ENCODE measurements at regions of chr15 and their contacts with region 1.

Region 1: DNA sequence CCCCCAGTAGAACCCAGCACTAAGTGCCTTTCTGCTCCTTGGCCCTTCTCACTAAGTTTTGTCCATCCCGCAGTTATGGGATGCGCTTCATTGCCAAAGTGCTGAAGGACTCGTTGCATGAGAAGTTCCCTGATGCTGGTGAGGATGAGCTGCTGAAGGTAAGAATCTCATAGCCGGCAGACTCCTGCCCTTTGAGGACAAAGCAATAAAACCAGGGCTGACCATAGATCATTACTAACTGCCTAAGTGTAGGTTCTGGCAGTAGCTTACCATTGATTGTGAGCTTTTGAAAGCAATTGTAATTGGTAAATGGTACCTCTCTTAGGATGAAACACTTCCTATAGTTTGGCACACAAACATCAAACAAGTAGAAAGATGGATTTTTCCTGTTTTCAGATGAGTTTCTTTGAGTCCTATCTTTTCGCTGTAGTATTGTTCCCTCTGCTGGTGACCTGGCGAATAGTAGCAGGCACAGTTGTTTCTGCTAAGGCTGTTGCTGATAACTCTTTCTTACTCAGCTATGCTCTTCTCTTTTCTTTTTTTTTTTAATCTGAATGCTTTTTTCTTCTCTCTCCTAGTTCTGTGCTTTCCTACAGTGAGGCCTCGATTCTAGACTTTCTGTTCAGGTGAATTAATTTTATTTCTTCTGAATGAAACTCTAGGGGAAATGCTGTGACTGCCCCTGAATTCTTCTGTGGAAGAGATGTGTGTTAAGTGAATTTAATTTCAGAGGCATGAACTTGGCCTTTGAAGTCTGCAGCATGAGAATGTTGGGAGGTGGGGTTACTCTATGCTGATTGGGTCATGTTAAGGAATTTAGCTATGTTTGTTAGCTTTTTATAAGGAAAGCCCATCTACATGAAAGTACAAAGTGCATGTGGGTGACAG is 47.4 kb upstream of the CRTC3 start:
- DNase-seq: peak; percentile 62
- ATAC-seq: peak; percentile 74
- H3K4me3 Mint-ChIP-seq: no peak overlapping the region
- H3K27ac Mint-ChIP-seq: no peak overlapping the region
- H3K4me1 Mint-ChIP-seq: peaks cover 25% of the 10 kb centered on the region
- H3K27me3 Mint-ChIP-seq: no peaks in the 10 kb centered on the region
- CTCF ChIP-seq: peak; percentile 74

Region 2: DNA sequence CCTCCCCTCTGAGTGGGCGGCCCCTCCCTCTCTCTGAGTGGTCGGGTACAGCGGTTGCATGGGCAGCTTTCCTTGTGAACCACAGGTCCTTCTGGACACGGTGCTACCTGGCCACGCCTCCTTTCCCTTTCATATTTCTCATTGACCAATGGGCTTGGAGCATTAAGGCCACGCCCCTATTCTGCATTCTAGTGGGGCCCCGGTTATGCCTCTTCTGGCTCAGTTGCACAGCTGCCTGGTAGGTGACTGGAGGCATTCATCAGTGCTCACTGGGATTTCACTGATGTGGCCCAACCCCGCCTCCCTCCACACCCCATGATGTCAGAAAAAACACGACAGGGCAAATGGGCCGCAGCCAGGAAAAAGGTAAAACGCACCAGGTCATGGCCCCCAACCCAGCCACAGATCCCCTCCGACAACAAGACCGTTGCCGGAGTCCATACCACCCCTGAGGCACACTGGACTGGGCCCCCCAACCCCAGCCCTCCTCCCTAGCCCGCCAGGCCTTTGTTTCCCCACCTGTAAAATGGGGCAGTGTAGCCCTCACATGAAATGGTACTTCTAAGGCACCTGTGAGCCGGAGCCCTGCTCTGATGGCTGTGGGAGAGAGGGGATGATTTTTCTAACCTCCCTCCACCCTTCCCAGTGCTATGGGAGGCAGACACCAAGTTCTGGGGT is 190.6 kb before region 1 on chr15:
- CTCF ChIA-PET with region 1: interaction called, 11 read pairs
- POLR2A ChIA-PET with region 1: no interaction called
- intact Hi-C with region 1: no loop called
- DNase-seq: peak; percentile 52
- ATAC-seq: no peak
- H3K4me3 Mint-ChIP-seq: no peak overlapping the region
- H3K27ac Mint-ChIP-seq: no peak overlapping the region
- H3K4me1 Mint-ChIP-seq: peaks cover 3% of the 10 kb centered on the region
- H3K27me3 Mint-ChIP-seq: peaks cover 4% of the 10 kb centered on the region
- CTCF ChIP-seq: no peak

Region 3: DNA sequence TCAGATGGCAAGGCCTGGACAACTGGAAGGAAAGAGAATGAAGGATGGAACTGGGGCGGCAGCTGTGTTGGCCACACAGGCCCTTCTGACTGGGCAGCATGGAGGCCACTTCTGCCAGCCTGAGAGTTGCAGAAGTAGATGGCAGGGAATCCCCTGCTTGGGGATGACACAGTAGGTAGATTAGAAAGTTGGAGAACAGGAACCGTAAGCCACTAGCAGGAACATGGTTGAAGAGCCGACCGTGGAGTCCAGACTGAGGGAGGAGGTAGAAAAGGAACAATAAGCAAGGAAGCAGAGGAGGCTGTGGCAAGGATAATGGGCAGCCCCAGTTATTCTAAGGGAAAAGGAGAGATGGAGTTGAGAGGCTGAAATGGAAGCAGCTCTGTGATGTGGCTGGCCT is 156.6 kb before region 1 on chr15:
- CTCF ChIA-PET with region 1: interaction called, 86 read pairs
- POLR2A ChIA-PET with region 1: no interaction called
- intact Hi-C with region 1: loop called (anchors 1 kb)
- DNase-seq: no peak
- ATAC-seq: no peak
- H3K4me3 Mint-ChIP-seq: no peak overlapping the region
- H3K27ac Mint-ChIP-seq: no peak overlapping the region
- H3K4me1 Mint-ChIP-seq: no peaks in the 10 kb centered on the region
- H3K27me3 Mint-ChIP-seq: no peaks in the 10 kb centered on the region
- CTCF ChIP-seq: no peak

Region 4: DNA sequence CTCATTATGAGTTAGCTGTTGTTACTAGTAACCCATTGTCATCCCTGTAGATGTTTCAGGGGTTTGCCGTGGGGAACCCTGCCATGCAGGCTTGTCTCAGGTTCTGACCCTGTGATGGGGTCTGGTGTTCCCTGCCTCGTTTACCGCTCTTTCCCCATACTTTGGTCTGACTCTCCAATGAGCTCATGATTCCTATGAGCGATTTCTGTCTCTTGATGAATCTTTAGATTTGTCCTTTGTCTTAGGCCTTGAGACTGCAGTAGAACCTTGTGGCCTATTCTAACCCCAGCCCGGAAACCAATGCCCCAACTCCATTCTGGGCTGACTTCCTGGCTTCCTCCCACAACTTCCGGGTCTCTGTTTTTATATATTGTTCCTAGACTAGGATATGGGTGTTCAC is 105.6 kb before region 1 on chr15:
- CTCF ChIA-PET with region 1: interaction called, 11 read pairs
- POLR2A ChIA-PET with region 1: no interaction called
- intact Hi-C with region 1: no loop called
- DNase-seq: peak; percentile 78
- ATAC-seq: peak; percentile 89
- H3K4me3 Mint-ChIP-seq: peak overlapping the region; percentile 16
- H3K27ac Mint-ChIP-seq: peak overlapping the region; percentile 96
- H3K4me1 Mint-ChIP-seq: peaks cover 38% of the 10 kb centered on the region
- H3K27me3 Mint-ChIP-seq: no peaks in the 10 kb centered on the region
- CTCF ChIP-seq: no peak

Region 5: GRCh38 chr15:90463381-90463780 is 19.0 kb before region 1 on chr15:
- CTCF ChIA-PET with region 1: interaction called, 21 read pairs
- POLR2A ChIA-PET with region 1: interaction called, 3 read pairs
- intact Hi-C with region 1: no loop called
- DNase-seq: no peak
- ATAC-seq: no peak
- H3K4me3 Mint-ChIP-seq: no peak overlapping the region
- H3K27ac Mint-ChIP-seq: no peak overlapping the region
- H3K4me1 Mint-ChIP-seq: peaks cover 17% of the 10 kb centered on the region
- H3K27me3 Mint-ChIP-seq: no peaks in the 10 kb centered on the region
- CTCF ChIP-seq: no peak

Region 6: DNA sequence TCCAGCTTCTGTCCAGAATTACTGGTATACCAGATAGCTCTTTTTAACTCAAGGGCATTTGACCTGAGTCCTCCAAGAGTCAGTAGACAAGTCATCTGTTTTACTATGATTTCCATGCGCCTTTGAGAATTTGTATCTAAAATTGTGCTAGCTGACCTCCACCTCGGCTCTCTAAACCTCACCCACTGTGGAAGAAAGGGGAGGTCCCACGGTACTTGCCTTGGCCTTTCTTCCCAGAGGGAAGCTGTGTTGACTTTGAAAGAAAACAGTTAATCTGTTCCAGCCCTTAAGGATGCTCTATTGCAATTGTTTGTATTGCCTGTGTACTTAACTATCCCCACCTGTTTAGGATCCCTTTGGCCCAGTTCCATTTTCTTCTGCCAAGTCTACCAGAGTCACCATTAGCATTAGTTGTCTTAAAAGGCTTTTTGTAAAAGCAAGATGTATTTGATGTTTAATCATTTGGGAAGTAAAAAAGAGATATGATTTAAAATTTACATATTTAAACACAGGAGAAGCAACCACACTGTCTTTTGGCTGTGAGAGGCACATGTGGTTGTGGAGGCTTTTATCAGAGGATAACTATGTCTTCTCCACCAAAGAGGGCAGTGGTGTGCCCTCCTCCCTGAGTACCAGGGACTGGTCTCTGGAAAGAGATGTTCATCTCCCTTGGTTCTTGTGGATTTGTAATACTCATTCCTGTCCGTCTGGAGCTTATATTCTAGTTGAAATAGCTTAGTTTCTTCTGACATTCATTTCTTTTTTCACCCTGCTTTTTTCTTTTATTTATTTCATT is 136.2 kb after region 1 on chr15:
- CTCF ChIA-PET with region 1: interaction called, 3 read pairs
- POLR2A ChIA-PET with region 1: no interaction called
- intact Hi-C with region 1: loop called (anchors 10 kb)
- DNase-seq: no peak
- ATAC-seq: no peak
- H3K4me3 Mint-ChIP-seq: no peak overlapping the region
- H3K27ac Mint-ChIP-seq: no peak overlapping the region
- H3K4me1 Mint-ChIP-seq: peaks cover 34% of the 10 kb centered on the region
- H3K27me3 Mint-ChIP-seq: no peaks in the 10 kb centered on the region
- CTCF ChIP-seq: no peak